Cardiac septum (tissue), 1 donor: ENCODE measurements at regions of chr6 and their contacts with region 1.

Region 1: GRCh38 chr6:42782622-42783176 is 847 bp downstream of the BICRAL start:
- DNase-seq: peak; percentile 90

Region 2: DNA sequence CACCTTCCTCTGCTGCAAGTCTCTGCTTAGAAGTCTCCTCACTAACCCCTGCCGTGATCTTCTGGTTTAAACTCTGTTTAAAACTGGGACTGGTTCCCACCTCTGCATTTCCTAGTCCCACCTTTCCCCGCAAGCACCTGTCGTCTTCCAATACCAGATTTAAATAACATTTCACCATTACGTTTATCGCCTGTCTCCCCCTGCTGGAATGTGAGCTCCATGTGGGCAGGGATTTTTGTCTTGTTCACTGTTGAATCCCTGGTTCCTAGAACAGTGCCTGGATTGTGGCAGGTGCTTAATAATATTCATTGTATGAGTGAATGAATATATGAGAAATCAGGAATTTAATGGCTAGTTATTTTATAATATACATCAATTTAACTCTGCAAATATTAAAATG is 606.8 kb before region 1 on chr6:
- intact Hi-C with region 1: no loop called
- DNase-seq: no peak

Region 3: GRCh38 chr6:42532038-42532669 is 250.5 kb before region 1 on chr6:
- intact Hi-C with region 1: no loop called
- DNase-seq: no peak

Region 4: DNA sequence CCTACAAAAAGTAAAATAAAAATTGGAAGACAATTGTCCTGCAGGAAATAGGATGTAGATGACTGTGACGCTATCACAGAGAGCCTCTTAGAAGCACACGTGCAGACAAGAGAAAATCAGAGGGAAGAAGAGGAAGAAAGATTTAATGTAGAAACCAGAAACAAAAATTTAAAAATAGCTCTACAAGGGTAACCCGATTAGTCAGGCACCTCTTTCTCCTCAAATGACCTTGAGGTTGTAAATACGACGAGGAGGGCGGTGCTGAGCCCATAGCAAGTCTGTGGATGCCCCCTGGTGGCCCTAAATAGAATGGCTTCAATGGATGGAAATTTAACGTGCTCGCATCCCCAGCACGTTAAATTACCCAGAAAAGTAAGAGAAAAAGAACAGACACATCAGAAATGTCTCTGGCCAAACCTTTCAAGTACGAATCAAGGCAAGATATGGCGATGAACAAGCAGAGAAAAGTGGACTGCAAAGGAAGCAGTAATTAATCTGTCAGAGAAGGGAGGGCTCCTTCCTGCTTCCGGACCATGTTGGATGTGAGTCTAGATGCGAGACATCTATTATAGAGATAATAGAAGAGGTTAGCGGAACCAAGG is 56.1 kb before region 1 on chr6:
- intact Hi-C with region 1: no loop called
- DNase-seq: peak; percentile 85

Region 5: GRCh38 chr6:42745707-42746462 is 36.8 kb before region 1 on chr6 and contains the start of gene TBCC:
- intact Hi-C with region 1: loop called (anchors 1 kb)
- DNase-seq: peak; percentile 97
- total RNA-seq, gene TBCC: 11.0 TPM

Region 6: DNA sequence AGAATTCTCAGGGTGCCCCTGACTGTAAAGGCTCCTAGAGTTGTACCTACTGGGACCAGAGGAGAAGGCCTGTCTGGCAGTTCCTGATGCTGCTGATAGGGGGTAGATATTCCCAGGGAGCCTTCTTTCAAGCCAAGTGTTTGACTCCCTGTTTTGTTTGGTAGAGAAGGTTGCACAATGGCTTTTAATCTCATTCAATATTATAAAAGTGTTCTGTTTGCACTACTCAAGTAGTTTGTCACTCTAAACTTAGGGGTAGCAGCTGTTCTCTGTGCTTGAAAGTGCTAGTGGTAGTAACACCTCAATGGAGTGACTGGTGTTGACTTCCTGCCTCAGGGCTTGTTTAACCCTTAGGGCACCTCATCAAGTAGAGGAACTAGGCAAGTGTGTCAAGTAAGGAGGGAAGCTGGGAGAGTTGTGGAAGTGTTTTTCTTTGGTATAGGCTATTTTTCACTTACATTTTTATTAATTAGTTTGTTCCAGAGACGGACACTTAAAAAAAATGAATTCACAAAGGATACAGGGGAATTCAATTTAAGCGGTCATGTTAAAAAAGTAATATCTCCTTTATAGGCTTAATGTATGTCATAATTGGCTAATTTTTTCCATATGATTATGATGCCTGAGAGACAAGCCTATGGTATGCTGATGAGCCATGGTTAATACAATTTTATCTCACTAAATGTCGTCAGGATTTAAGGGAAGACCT is 37.3 kb after region 1 on chr6:
- intact Hi-C with region 1: loop called (anchors 5 kb)
- DNase-seq: no peak